ENCODE measurements at regions of chr3 and their contacts with region 1.

Region 1: GRCh38 chr3:47705391-47705790 is 76.3 kb downstream of the SMARCC1 start:
- DNase-seq: no peak
- ATAC-seq: no peak
- H3K4me3 ChIP-seq: no peak overlapping the region
- H3K27ac ChIP-seq: no peak overlapping the region
- H3K4me1 ChIP-seq: no peaks in the 10 kb centered on the region
- H3K27me3 ChIP-seq: no peaks in the 10 kb centered on the region
- CTCF ChIP-seq: no peak
- POLR2A ChIP-seq: no peak
- RAD21 ChIP-seq: no peak

Region 2: DNA sequence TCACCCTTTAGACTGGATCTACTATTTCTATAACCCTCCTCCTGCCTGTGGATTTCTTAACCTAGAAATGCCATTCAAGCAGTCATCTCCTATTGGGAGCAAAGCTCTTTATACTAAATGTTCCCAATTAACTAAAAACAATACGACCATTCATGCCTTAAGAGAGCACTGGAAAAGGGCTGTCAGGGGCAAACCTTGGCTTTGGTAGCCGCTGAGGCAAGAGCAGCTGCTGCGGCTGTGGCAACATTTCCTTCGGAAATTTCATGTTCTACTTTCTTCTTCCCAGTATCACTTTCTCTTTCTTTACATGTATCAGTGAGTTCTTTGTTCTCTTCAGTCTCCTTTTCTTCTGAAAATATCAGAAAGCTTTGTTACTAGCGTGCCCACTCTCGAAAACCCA is 70.4 kb before region 1 on chr3:
- CTCF ChIA-PET with region 1: no interaction called
- POLR2A ChIA-PET with region 1: no interaction called
- dilution Hi-C with region 1: no loop called
- in situ Hi-C with region 1: no loop called
- intact Hi-C with region 1: loop called (anchors 10 kb)
- DNase-seq: no peak
- ATAC-seq: no peak
- H3K4me3 ChIP-seq: no peak overlapping the region
- H3K27ac ChIP-seq: no peak overlapping the region
- H3K4me1 ChIP-seq: no peaks in the 10 kb centered on the region
- H3K27me3 ChIP-seq: no peaks in the 10 kb centered on the region
- CTCF ChIP-seq: no peak
- POLR2A ChIP-seq: no peak
- RAD21 ChIP-seq: no peak